H1 (cell line): ENCODE measurements at regions of chr1 and their contacts with region 1.

Region 1: DNA sequence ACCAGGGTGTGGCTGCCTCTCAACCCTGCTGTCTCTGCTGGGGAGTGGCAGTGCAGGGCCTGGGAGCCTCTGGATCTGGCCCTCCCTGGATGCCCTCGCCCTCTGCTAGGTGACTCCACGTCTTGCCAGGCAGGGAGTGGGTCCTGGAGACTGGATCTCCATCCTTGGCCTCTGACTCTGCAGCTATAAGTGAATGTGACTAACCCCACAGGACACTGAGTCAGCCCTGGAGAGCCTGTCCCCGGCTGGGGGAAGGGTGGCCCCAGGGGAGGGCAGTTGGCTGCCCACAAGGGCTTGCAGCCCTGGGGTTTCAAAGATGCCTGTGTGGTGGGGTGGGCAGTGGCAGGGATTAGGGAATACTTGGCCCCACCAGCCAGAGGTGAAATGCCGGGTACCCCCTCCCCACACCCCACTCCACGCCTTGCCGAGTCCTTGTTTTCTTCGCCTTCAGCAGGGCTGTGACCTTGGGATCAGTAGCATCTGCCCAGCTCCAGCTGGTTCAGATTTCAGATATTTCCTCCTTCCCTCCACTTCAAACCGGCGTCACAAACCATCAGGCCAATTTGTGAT is 1.9 kb upstream of the MYBPH start:
- DNase-seq: no peak
- H3K4me3 ChIP-seq: no peak overlapping the region
- H3K27ac ChIP-seq: no peak overlapping the region
- H3K4me1 ChIP-seq: peaks cover 0 to 7% (median 3%) of the 10 kb centered on the region in 4 experiments; a peak in 4 of 7 replicates
- H3K27me3 ChIP-seq: no peaks in the 10 kb centered on the region
- CTCF ChIP-seq: no peak
- EP300 ChIP-seq: no peak
- POLR2A ChIP-seq: no peak
- RAD21 ChIP-seq: no peak

Region 2: GRCh38 chr1:203166566-203166940 is 11.0 kb before region 1 on chr1:
- CTCF ChIA-PET with region 1: interaction called, 64 read pairs
- POLR2A ChIA-PET with region 1: no interaction called
- DNase-seq: no peak
- H3K4me3 ChIP-seq: no peak overlapping the region
- H3K27ac ChIP-seq: no peak overlapping the region
- H3K4me1 ChIP-seq: no peaks in the 10 kb centered on the region; a peak in 1 of 7 replicates
- H3K27me3 ChIP-seq: no peaks in the 10 kb centered on the region
- CTCF ChIP-seq: peak; percentile 15 to 32 (median 17); a peak in 2 of 4 replicates
- EP300 ChIP-seq: no peak
- POLR2A ChIP-seq: no peak
- RAD21 ChIP-seq: peak; percentile 5 to 23; a peak in 1 of 4 replicates